ENCODE measurements at regions of chr17 and their contacts with region 1.

Region 1: DNA sequence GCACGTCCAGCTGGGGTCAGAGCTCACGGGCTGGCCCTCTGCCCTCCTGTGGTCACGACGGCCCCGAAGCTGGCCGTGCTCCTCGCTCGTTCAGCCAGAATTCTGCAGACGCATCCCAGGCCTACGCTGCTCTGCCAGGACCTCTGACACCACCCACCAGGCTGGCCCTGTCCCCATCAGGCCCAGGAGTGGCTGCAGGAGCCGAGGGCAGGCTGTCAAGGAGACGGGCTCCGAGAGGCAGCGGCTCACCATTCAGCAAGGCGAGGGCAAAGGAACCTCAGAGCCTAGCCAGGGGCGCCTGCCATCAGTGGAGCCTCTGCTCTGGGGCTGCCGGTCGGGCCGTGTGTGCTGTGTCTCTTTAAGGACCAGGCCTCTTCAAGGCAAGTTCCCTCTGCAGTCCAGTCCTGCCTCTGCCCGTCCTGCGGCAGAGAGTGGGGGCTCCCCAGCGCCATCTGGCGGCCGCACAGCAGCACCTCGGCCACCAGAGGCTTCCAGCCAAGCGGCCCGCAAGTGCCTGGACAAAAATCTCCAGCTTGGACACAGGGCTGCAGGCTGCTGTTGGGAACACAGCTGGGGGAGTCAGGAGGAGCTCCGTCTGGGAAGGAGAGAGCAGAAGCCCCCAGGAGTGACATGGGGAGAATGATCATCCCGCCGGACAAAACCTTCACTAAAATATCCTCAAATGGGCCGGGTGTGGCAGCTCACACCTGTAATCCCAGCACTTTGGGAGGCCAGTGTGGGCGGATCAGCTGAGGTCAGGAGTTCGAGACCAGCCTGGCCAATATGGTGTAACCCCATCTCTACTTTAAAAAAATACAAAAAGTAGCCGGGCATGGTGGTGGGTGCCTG is 7.4 kb upstream of the ABR start:
- DNase-seq: peak; percentile 93
- H3K4me3 ChIP-seq: peak overlapping the region in 1 of 2 experiments; percentile 12; a peak in 1 of 4 replicates
- H3K27ac ChIP-seq: no peak overlapping the region
- H3K4me1 ChIP-seq: peaks cover 0 to 16% of the 10 kb centered on the region in 2 experiments; a peak in 1 of 4 replicates
- H3K27me3 ChIP-seq: no peaks in the 10 kb centered on the region
- CTCF ChIP-seq: peak; percentile 95
- EP300 ChIP-seq: no peak
- RAD21 ChIP-seq: peak; percentile 80

Region 2: GRCh38 chr17:1110862-1111598 is 76.1 kb before region 1 on chr17:
- CTCF ChIA-PET with region 1: interaction called, 18 read pairs
- POLR2A ChIA-PET with region 1: no interaction called
- DNase-seq: peak; percentile 65
- H3K4me3 ChIP-seq: no peak overlapping the region; a peak in 1 of 4 replicates
- H3K27ac ChIP-seq: peak overlapping the region; percentile 82 to 98
- H3K4me1 ChIP-seq: peaks cover 45% of the 10 kb centered on the region in 2 experiments; a peak in 3 of 4 replicates
- H3K27me3 ChIP-seq: no peaks in the 10 kb centered on the region
- CTCF ChIP-seq: no peak
- EP300 ChIP-seq: peak in 1 of 2 experiments; percentile 74; a peak in 1 of 4 replicates
- RAD21 ChIP-seq: no peak

Region 3: DNA sequence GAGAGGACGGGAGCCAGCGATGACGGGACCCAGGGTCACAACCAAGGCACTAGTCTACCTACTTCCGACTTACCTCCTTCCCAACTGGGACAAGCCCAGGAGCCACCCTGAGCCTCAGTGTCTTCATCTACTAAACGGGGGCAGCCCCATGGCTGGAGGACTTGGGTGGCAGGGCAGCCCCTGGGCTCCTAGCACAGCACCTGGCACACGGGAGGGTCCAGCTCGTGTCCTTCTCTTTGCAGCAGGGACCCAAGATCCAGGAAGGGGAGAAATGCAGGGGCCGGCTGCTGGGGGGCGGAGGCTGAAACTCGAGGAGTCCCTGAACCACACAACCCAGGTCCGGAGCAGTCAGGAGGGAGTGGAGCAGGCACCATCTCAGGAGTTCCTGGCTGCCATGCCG is 70.5 kb before region 1 on chr17:
- CTCF ChIA-PET with region 1: interaction called, 248 read pairs
- POLR2A ChIA-PET with region 1: no interaction called
- DNase-seq: no peak
- H3K4me3 ChIP-seq: no peak overlapping the region
- H3K27ac ChIP-seq: no peak overlapping the region
- H3K4me1 ChIP-seq: peaks cover 14 to 19% of the 10 kb centered on the region in 2 experiments; a peak in 3 of 4 replicates
- H3K27me3 ChIP-seq: no peaks in the 10 kb centered on the region
- CTCF ChIP-seq: no peak
- EP300 ChIP-seq: no peak
- RAD21 ChIP-seq: no peak

Region 4: GRCh38 chr17:1134634-1135324 is 52.4 kb before region 1 on chr17:
- CTCF ChIA-PET with region 1: interaction called, 15 read pairs
- POLR2A ChIA-PET with region 1: no interaction called
- DNase-seq: no peak
- H3K4me3 ChIP-seq: no peak overlapping the region
- H3K27ac ChIP-seq: no peak overlapping the region
- H3K4me1 ChIP-seq: peaks cover 0 to 10% of the 10 kb centered on the region in 2 experiments; a peak in 2 of 4 replicates
- H3K27me3 ChIP-seq: no peaks in the 10 kb centered on the region
- CTCF ChIP-seq: no peak
- EP300 ChIP-seq: no peak
- RAD21 ChIP-seq: no peak

Region 5: DNA sequence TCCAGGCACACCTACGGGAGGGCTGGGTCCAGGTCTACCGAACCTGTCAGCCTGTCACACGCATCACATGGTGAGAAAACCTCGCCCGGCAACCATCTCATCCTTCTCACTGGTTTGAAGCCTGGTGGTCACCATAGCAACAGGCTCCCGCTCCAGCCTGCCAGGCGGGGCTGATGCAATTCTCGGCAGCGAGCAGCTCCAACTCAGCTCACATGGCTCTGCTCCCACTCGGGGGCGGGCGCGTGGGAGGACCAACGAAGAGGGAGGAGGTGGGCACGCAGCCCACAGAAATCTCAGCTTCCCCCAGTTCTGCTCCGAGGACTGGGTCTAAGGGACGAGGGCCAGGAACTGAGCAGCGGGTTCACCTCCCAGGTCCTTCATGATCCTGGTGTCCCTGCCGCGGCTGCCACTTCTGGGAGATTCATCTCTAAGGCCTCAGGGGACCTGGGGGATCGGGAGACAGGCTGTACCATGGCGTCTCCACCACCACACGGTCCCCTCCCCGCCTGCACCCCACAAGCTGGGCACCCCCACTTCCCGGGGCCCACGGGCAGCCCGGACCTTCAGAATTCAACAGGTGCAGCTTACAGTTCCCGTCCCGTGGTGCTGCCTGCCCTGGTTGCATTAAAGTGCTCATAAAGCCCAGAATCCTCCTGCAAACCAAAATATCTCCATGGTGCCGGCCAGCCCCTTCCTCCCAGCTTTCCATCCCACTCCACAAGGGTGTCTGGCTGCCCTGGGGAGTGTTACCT is 33.2 kb before region 1 on chr17:
- CTCF ChIA-PET with region 1: interaction called, 11 read pairs
- POLR2A ChIA-PET with region 1: no interaction called
- DNase-seq: peak; percentile 93
- H3K4me3 ChIP-seq: no peak overlapping the region; a peak in 1 of 4 replicates
- H3K27ac ChIP-seq: no peak overlapping the region; a peak in 1 of 4 replicates
- H3K4me1 ChIP-seq: peaks cover 0 to 16% of the 10 kb centered on the region in 2 experiments; a peak in 1 of 4 replicates
- H3K27me3 ChIP-seq: no peaks in the 10 kb centered on the region
- CTCF ChIP-seq: no peak
- EP300 ChIP-seq: no peak
- RAD21 ChIP-seq: no peak

Region 6: GRCh38 chr17:1197781-1198490 is 10.8 kb after region 1 on chr17:
- CTCF ChIA-PET with region 1: interaction called, 72 read pairs
- POLR2A ChIA-PET with region 1: no interaction called
- DNase-seq: no peak
- H3K4me3 ChIP-seq: no peak overlapping the region
- H3K27ac ChIP-seq: no peak overlapping the region
- H3K4me1 ChIP-seq: no peaks in the 10 kb centered on the region
- H3K27me3 ChIP-seq: no peaks in the 10 kb centered on the region; the same call in 1 of the 2 replicates
- CTCF ChIP-seq: no peak
- EP300 ChIP-seq: no peak
- RAD21 ChIP-seq: no peak

Region 7: GRCh38 chr17:1488030-1488863 is 301.1 kb after region 1 on chr17:
- CTCF ChIA-PET with region 1: no interaction called
- POLR2A ChIA-PET with region 1: no interaction called
- DNase-seq: peak; percentile 94
- H3K4me3 ChIP-seq: peak overlapping the region; percentile 44 to 51
- H3K27ac ChIP-seq: peak overlapping the region; percentile 81 to 85
- H3K4me1 ChIP-seq: peaks cover 24 to 40% of the 10 kb centered on the region in 2 experiments; a peak in 2 of 4 replicates
- H3K27me3 ChIP-seq: no peaks in the 10 kb centered on the region
- CTCF ChIP-seq: no peak
- EP300 ChIP-seq: peak in 1 of 2 experiments; percentile 31; a peak in 1 of 4 replicates
- RAD21 ChIP-seq: no peak